ENCODE measurements at regions of chr11 and their contacts with region 1.

Region 1: GRCh38 chr11:122690801-122691548 is 35.5 kb downstream of the UBASH3B start:
- DNase-seq: peak in 5 of 9 donors; percentile 8 to 45 (median 33)
- ATAC-seq: peak; percentile 64
- H3K4me3 ChIP-seq: peak overlapping the region; percentile 33
- H3K4me3 Mint-ChIP-seq: peak overlapping the region; percentile 74 to 93 (median 84)
- H3K27ac ChIP-seq: peak overlapping the region; percentile 75
- H3K27ac Mint-ChIP-seq: peak overlapping the region; percentile 83 to 96 (median 93)
- H3K4me1 ChIP-seq: peaks cover 4 to 65% of the 10 kb centered on the region in 2 donors
- H3K4me1 Mint-ChIP-seq: peaks cover 42 to 87% (median 77%) of the 10 kb centered on the region in 7 donors
- H3K27me3 ChIP-seq: no peaks in the 10 kb centered on the region
- H3K27me3 Mint-ChIP-seq: no peaks in the 10 kb centered on the region

Region 2: DNA sequence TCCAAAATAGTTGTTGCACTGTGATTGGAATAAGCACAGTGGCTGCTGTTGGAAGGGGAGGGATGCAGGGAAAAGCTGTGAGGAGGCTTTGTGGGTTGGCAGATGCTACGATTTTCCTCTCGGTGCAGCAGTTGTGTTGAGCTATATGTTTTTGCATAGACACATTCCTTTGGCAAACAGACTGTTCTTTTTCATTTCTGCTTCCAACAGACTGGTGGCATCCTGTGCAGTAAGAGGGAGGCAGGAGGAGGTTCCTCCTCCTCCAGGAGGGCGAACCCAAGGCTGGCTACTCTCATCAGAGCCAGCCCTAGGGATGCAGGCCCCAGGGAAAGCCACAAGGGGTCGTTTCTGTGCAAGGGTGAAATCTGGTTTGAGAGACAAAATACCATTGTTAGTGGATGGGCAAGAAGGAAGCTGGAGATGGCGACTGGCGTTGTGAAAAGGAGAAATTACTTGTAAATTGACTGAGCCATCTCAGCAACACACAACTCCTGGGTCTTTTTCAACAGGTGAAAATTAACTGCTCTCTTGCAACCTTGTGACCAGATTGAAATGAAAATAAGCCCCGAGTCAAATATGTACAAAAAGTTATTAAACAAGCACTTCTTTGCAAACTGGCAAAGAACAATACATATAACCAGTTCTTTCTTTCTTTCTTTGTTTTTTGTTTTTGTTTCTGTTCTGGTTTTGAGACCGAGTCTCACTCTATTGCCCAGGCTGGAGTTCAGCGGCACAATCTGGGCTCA is 62.0 kb before region 1 on chr11:
- CTCF ChIA-PET with region 1: interaction called, 5 read pairs
- POLR2A ChIA-PET with region 1: no interaction called
- intact Hi-C with region 1: loop called (anchors 2 to 10 kb)
- DNase-seq: peak; percentile 46 to 70 (median 62)
- ATAC-seq: peak; percentile 93
- H3K4me3 ChIP-seq: no peak overlapping the region
- H3K4me3 Mint-ChIP-seq: no peak overlapping the region
- H3K27ac ChIP-seq: no peak overlapping the region
- H3K27ac Mint-ChIP-seq: peak overlapping the region in 4 of 9 donors; percentile 18 to 49 (median 24)
- H3K4me1 ChIP-seq: no peaks in the 10 kb centered on the region
- H3K4me1 Mint-ChIP-seq: peaks cover 0 to 30% (median 16%) of the 10 kb centered on the region in 7 donors
- H3K27me3 ChIP-seq: no peaks in the 10 kb centered on the region
- H3K27me3 Mint-ChIP-seq: peaks cover 0 to 16% (median 0%) of the 10 kb centered on the region in 5 donors

Region 3: DNA sequence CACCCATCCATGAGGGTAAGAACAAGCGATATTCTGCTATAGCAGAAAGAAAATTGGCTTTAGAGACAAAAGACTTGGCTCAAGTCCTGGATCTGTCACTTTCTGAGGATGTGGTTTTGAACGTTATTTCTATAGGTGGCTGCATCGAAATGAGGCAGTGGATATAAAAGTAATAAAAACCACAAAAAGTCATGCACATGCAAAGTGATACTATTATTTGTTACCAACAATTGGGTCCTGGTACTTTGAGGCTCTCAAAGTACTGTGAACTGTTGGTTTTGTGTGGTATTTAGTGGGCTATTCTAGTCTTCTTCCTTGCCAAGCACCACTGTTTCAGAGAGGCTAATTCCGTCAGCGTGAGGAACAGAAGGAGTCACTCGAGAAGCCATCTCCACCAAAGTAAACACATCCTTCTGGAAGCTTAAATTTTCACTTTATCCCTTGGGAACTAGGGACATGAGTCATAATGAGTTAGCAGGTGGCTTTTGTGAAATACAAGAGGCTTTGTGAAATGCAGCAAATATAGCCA is 22.3 kb before region 1 on chr11:
- CTCF ChIA-PET with region 1: interaction called, 29 read pairs
- POLR2A ChIA-PET with region 1: interaction called, 64 read pairs
- intact Hi-C with region 1: no loop called
- DNase-seq: peak in 6 of 9 donors; percentile 22 to 68 (median 52)
- ATAC-seq: peak; percentile 47
- H3K4me3 ChIP-seq: no peak overlapping the region
- H3K4me3 Mint-ChIP-seq: peak overlapping the region; percentile 9 to 77 (median 62)
- H3K27ac ChIP-seq: peak overlapping the region; percentile 55
- H3K27ac Mint-ChIP-seq: peak overlapping the region in 8 of 9 donors; percentile 79 to 99 (median 90)
- H3K4me1 ChIP-seq: peaks cover 45 to 53% of the 10 kb centered on the region in 2 donors
- H3K4me1 Mint-ChIP-seq: peaks cover 36 to 91% (median 77%) of the 10 kb centered on the region in 7 donors
- H3K27me3 ChIP-seq: no peaks in the 10 kb centered on the region
- H3K27me3 Mint-ChIP-seq: peaks cover 0 to 9% (median 0%) of the 10 kb centered on the region in 5 donors

Region 4: GRCh38 chr11:122673701-122674100 is 17.3 kb before region 1 on chr11:
- CTCF ChIA-PET with region 1: interaction called, 29 read pairs
- POLR2A ChIA-PET with region 1: interaction called, 64 read pairs
- intact Hi-C with region 1: loop called in 1 of 2 experiments (anchors 2 kb)
- DNase-seq: peak in 1 of 9 donors; percentile 20
- ATAC-seq: no peak
- H3K4me3 ChIP-seq: no peak overlapping the region
- H3K4me3 Mint-ChIP-seq: peak overlapping the region in 7 of 10 donors; percentile 2 to 70 (median 37)
- H3K27ac ChIP-seq: peak overlapping the region; percentile 36
- H3K27ac Mint-ChIP-seq: peak overlapping the region in 8 of 9 donors; percentile 48 to 99 (median 88)
- H3K4me1 ChIP-seq: peaks cover 43 to 70% of the 10 kb centered on the region in 2 donors
- H3K4me1 Mint-ChIP-seq: peaks cover 32 to 98% (median 83%) of the 10 kb centered on the region in 7 donors
- H3K27me3 ChIP-seq: no peaks in the 10 kb centered on the region
- H3K27me3 Mint-ChIP-seq: peaks cover 0 to 3% (median 0%) of the 10 kb centered on the region in 5 donors

Region 5: DNA sequence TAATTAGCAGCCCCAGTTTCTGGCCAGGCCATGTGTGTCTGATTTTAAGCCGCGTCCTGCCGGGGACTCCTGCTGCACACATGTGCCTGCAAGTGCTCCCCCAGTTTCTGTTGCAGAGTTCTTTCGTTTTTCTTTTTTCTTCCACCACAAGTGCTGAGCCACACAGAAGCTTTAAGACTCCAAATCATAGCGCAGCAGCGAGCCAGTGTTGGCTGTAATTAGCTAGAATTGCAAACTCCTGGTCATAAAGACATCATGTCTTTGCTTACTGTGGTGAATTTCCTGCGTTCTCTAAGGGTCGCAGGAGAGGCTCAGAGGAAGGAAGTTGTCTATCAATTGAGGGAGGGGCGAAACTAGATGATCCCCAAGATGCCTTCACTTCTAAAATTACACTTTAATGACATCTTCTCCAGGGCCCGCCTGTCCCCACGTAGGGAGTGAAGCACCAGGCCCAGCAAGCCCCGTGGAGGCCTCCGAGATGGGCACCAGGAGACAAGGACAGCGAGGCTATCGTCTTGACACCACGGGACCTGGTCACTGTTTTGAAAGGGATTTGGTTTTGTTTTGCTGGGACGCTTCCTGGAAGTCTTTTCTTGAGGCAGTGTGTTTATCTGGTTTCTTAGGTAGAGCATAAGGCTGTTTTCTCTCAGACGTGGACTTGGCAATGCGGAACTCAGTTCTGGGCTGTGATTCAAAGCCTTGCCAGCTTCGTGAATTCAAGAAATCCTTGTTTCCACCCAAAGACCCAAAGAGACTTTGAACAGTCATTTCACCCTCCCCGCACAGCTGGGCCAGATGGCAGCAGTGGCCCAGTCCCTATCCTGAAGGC is 36.3 kb after region 1 on chr11:
- CTCF ChIA-PET with region 1: interaction called, 13 read pairs
- POLR2A ChIA-PET with region 1: interaction called, 37 read pairs
- intact Hi-C with region 1: loop called (anchors 1 kb)
- DNase-seq: peak in 7 of 9 donors; percentile 33 to 56 (median 48)
- ATAC-seq: peak; percentile 77
- H3K4me3 ChIP-seq: peak overlapping the region; percentile 37
- H3K4me3 Mint-ChIP-seq: peak overlapping the region; percentile 79 to 95 (median 85)
- H3K27ac ChIP-seq: peak overlapping the region; percentile 81
- H3K27ac Mint-ChIP-seq: peak overlapping the region; percentile 88 to 100 (median 97)
- H3K4me1 ChIP-seq: peaks cover 20 to 64% of the 10 kb centered on the region in 2 donors
- H3K4me1 Mint-ChIP-seq: peaks cover 53 to 73% (median 66%) of the 10 kb centered on the region in 7 donors
- H3K27me3 ChIP-seq: no peaks in the 10 kb centered on the region
- H3K27me3 Mint-ChIP-seq: no peaks in the 10 kb centered on the region

Region 6: GRCh38 chr11:122743949-122744348 is 53.0 kb after region 1 on chr11:
- CTCF ChIA-PET with region 1: interaction called, 3 read pairs
- POLR2A ChIA-PET with region 1: interaction called, 99 read pairs
- intact Hi-C with region 1: loop called (anchors 1 to 2 kb)
- DNase-seq: peak; percentile 28 to 90 (median 80)
- ATAC-seq: peak; percentile 75
- H3K4me3 ChIP-seq: peak overlapping the region; percentile 39
- H3K4me3 Mint-ChIP-seq: no peak overlapping the region
- H3K27ac ChIP-seq: peak overlapping the region; percentile 84
- H3K27ac Mint-ChIP-seq: no peak overlapping the region
- H3K4me1 ChIP-seq: peaks cover 58 to 66% of the 10 kb centered on the region in 2 donors
- H3K4me1 Mint-ChIP-seq: peaks cover 0 to 40% (median 18%) of the 10 kb centered on the region in 7 donors
- H3K27me3 ChIP-seq: no peaks in the 10 kb centered on the region
- H3K27me3 Mint-ChIP-seq: peaks cover 0 to 21% (median 0%) of the 10 kb centered on the region in 5 donors

Region 7: DNA sequence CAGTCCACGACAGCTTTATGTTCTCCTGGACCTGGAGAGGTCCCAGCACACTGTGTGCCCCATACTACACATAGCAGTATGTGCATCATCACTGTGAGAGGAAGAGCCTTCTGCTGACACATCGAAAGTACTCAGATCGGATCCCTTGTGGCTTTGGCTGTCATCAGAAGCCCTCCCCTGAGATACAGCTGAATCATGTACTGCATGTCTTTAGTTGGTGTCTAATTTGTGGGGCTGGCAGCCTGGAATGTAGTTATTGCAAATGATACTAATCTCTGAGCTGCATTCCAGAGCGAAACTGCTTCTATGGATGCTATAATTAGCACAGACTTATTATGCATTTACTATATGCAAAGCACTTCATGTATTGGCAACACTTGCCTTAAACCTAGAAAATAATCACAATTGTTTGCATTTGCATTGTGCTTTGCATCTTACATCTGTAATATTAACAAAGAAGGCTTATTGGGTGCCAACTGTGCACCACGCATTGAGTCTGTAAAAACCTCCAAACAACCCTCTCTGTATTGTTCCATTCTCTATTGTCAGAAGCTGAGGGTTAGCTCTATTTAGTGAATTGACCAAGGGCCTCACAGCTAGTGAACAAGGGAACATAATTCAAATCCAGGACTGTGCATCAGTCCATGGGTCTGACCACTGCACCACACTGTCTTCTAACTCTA is 58.2 kb after region 1 on chr11:
- CTCF ChIA-PET with region 1: interaction called, 32 read pairs
- POLR2A ChIA-PET with region 1: interaction called, 99 read pairs
- intact Hi-C with region 1: loop called (anchors 1 to 2 kb)
- DNase-seq: peak in 5 of 9 donors; percentile 17 to 51 (median 28)
- ATAC-seq: peak; percentile 81
- H3K4me3 ChIP-seq: no peak overlapping the region
- H3K4me3 Mint-ChIP-seq: peak overlapping the region in 3 of 10 donors; percentile 8 to 45 (median 18)
- H3K27ac ChIP-seq: no peak overlapping the region
- H3K27ac Mint-ChIP-seq: peak overlapping the region in 2 of 9 donors; percentile 48 to 49
- H3K4me1 ChIP-seq: peaks cover 41 to 50% of the 10 kb centered on the region in 2 donors
- H3K4me1 Mint-ChIP-seq: peaks cover 4 to 70% (median 35%) of the 10 kb centered on the region in 7 donors
- H3K27me3 ChIP-seq: no peaks in the 10 kb centered on the region
- H3K27me3 Mint-ChIP-seq: peaks cover 0 to 13% (median 0%) of the 10 kb centered on the region in 5 donors

Measured in naive thymus-derived CD4-positive, alpha-beta T cell (primary cell).